Ascending aorta (tissue), 2 donors: ENCODE measurements at regions of chr12 and their contacts with region 1.

Region 1: GRCh38 chr12:119412811-119413794 is 78.6 kb downstream of the CCDC60 start:
- DNase-seq: peak in 1 of 2 donors; percentile 75
- H3K4me3 ChIP-seq: no peak overlapping the region
- H3K27ac ChIP-seq: no peak overlapping the region
- H3K4me1 ChIP-seq: peaks cover 0 to 3% of the 10 kb centered on the region in 2 donors
- H3K27me3 ChIP-seq: no peaks in the 10 kb centered on the region
- CTCF ChIP-seq: peak; percentile 64 to 85 (median 83)

Region 2: DNA sequence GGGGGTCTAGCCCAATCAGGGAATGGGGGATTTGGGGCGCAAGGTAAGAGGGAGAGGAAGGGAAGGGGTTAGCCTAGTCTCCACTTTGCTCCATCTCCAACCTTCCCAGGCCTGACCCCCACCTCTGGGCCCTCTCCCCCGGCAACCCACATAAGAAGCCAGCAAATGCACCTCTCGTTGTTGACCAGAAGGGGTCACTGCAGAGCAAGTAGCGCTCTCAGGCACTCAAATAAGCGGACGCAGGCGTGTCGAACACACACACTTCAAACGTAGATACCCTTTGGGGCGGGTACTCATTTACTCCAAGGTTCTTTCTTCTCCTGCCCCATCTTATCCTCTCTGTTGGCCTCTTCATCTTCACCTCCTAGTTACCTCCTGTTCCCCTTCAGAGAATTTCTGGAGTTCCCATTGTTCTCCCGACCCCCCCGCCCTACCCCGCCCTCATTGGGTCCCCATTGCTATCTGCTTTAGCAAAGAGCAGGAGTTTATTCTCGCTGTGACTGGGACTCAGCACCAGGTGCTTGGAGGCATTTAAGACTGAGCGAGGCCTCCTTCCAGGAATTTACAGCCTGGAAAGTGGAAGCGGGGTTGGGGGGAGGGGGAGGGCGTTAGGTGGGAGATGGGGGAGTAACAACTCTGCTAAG is 433.2 kb before region 1 on chr12:
- intact Hi-C with region 1: loop called (anchors 5 kb)
- DNase-seq: no peak
- H3K4me3 ChIP-seq: no peak overlapping the region
- H3K27ac ChIP-seq: no peak overlapping the region
- H3K4me1 ChIP-seq: no peaks in the 10 kb centered on the region
- H3K27me3 ChIP-seq: no peaks in the 10 kb centered on the region
- CTCF ChIP-seq: peak; percentile 27 to 51 (median 34)

Region 3: GRCh38 chr12:119288576-119288975 is 124.5 kb before region 1 on chr12:
- intact Hi-C with region 1: no loop called
- DNase-seq: no peak
- H3K4me3 ChIP-seq: no peak overlapping the region
- H3K27ac ChIP-seq: no peak overlapping the region
- H3K4me1 ChIP-seq: no peaks in the 10 kb centered on the region
- H3K27me3 ChIP-seq: no peaks in the 10 kb centered on the region
- CTCF ChIP-seq: no peak

Region 4: DNA sequence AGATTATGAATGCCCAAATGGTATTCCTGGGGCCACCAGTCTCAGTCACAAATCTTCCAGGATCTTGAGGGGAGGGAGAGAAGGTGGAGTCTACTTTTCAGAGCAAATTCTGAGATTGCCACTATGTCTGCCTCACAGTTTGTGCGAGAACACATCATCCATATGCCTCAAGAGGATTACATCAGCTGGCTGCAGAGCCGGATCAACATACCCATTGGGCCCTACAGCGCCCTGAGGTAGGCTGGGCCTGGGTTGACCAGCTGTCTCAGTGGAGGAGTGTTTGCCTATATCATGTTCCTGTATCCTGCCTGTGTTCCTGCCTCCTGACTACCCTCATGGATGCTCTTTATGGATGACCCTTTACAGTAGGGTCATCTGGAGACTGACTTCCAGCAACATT is 127.4 kb after region 1 on chr12:
- intact Hi-C with region 1: no loop called
- DNase-seq: no peak
- H3K4me3 ChIP-seq: no peak overlapping the region
- H3K27ac ChIP-seq: no peak overlapping the region
- H3K4me1 ChIP-seq: no peaks in the 10 kb centered on the region
- H3K27me3 ChIP-seq: no peaks in the 10 kb centered on the region
- CTCF ChIP-seq: no peak

Region 5: GRCh38 chr12:119576118-119576810 is 163.2 kb after region 1 on chr12:
- intact Hi-C with region 1: no loop called
- DNase-seq: no peak
- H3K4me3 ChIP-seq: no peak overlapping the region
- H3K27ac ChIP-seq: no peak overlapping the region
- H3K4me1 ChIP-seq: no peaks in the 10 kb centered on the region
- H3K27me3 ChIP-seq: no peaks in the 10 kb centered on the region
- CTCF ChIP-seq: no peak